MCF 10A (cell line): ENCODE measurements at regions of chr17 and their contacts with region 1.

Region 1: GRCh38 chr17:7484067-7484918 is at the start of gene POLR2A:
- DNase-seq: peak; percentile 98
- H3K4me3 Mint-ChIP-seq: peak within 1 kb of the TSS; percentile 79
- H3K27ac Mint-ChIP-seq: peak within 1 kb of the TSS; percentile 100
- H3K4me1 Mint-ChIP-seq: peaks cover 43% of the 10 kb centered on the region
- H3K27me3 Mint-ChIP-seq: no peaks in the 10 kb centered on the region
- CTCF ChIP-seq: no peak
- total RNA-seq, gene POLR2A: 89.6 and 107 TPM in 2 replicates

Region 2: DNA sequence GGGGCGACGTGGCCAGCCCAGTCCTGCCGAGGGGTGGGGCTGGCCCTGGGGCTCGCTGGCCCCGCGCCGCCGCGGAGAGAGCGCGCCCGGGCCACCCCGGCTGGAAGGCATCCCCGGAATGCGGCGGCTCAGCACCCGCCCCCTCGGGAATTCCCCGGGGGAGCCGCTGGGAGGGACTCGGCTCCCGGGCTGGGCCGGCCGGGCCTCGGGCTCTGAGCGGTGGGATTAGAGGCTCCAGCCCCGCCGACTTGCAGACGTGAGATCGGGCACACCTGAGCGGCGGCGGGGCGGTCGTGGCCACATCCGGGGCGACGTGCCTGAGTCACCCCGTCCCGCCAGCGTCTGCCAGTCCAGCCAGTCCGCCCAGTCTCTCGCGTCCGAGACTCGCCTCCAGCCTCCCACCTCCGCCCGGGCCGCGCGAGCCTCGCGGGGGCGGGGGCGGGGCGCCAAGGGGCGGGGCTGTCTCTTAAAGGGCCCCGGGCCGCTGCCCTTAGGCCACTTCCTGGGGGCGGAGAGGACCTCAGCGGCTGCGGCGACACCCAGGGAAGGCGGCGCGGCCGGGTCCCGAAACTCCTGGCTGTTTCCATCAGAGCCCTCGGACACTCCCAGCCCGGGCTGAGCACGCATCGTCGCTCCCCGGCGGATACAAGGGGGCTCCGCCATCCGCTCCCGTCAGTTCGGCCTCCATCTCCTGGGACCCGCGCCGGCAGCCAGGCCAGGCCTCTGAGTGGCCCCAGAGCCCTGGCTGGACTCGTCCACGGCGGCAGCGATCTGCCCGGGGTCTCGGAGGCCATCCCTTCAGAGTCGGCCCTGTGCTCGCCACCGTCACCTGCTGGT is 132.4 kb before region 1 on chr17 and contains the start of gene KCTD11:
- CTCF ChIA-PET with region 1: interaction called, 5 read pairs
- POLR2A ChIA-PET with region 1: interaction called, 21 read pairs
- intact Hi-C with region 1: loop called (anchors 5 kb)
- DNase-seq: peak; percentile 89
- H3K4me3 Mint-ChIP-seq: peak within 1 kb of the TSS; percentile 85
- H3K27ac Mint-ChIP-seq: peak within 1 kb of the TSS; percentile 93
- H3K4me1 Mint-ChIP-seq: peaks cover 17% of the 10 kb centered on the region
- H3K27me3 Mint-ChIP-seq: no peaks in the 10 kb centered on the region
- CTCF ChIP-seq: no peak
- total RNA-seq, gene KCTD11: 9.2 and 10.1 TPM in 2 replicates

Region 3: GRCh38 chr17:7454980-7455379 is 29.3 kb before region 1 on chr17:
- CTCF ChIA-PET with region 1: interaction called, 3 read pairs
- POLR2A ChIA-PET with region 1: interaction called, 95 read pairs
- intact Hi-C with region 1: no loop called
- DNase-seq: no peak
- H3K4me3 Mint-ChIP-seq: peak overlapping the region; percentile 74
- H3K27ac Mint-ChIP-seq: peak overlapping the region; percentile 14
- H3K4me1 Mint-ChIP-seq: peaks cover 13% of the 10 kb centered on the region
- H3K27me3 Mint-ChIP-seq: no peaks in the 10 kb centered on the region
- CTCF ChIP-seq: no peak

Region 4: DNA sequence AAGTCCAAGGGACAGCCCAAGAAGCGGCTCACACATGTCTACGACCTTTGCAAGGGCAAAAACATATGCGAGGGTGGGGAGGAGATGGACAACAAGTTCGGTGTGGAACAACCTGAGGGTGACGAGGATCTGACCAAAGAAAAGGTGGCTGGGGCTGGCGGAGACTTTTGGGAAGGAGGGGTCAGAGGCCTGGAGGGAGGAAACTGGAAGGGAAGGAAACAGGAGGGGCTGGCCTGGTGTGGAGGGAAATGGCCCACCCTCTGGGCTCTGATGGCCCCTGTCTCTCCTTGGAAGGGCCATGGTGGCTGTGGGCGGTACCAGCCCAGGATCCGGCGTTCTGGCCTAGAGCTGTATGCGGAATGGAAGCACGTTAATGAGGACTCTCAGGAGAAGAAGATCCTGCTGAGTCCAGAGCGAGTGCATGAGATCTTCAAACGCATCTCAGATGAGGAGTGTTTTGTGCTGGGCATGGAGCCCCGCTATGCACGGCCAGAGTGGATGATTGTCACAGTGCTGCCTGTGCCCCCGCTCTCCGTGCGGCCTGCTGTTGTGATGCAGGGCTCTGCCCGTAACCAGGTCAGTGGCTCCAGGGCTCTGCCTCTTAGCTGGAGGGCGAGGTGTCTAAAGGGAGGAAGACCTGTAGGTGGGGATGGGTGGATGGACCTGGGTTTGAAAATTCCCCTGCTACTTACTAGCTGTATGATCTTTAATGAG is 12.3 kb after region 1 on chr17:
- CTCF ChIA-PET with region 1: interaction called, 5 read pairs
- POLR2A ChIA-PET with region 1: interaction called, 11 read pairs
- intact Hi-C with region 1: no loop called
- DNase-seq: no peak
- H3K4me3 Mint-ChIP-seq: no peak overlapping the region
- H3K27ac Mint-ChIP-seq: no peak overlapping the region
- H3K4me1 Mint-ChIP-seq: peaks cover 20% of the 10 kb centered on the region
- H3K27me3 Mint-ChIP-seq: no peaks in the 10 kb centered on the region
- CTCF ChIP-seq: no peak

Region 5: DNA sequence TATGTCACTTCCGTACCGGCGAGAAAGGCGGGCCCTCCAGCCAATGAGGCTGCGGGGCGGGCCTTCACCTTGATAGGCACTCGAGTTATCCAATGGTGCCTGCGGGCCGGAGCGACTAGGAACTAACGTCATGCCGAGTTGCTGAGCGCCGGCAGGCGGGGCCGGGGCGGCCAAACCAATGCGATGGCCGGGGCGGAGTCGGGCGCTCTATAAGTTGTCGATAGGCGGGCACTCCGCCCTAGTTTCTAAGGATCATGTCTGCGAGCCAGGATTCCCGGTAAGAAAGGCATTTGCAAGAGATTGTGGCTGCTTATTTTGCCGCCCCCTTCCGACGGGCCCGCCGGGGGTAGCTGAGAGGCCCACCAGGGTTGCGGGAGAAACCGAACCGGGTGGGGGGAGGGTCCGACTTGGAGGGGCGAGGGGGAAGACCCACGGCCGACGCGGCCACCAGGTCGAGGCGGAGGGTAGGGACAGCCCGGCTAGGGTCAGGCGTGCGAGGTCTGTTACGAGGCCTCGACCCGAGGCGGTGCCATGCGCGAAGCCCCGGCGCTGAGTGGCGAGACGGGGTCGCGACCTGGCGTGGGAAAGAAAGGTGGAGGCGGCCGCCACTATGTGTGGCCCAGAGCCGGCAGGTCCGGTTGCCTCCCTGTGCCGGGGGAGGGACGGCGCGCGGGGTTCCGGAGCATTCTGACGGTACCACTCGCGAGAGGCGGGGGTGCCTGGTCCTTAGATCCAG is 88.5 kb after region 1 on chr17:
- CTCF ChIA-PET with region 1: interaction called, 4 read pairs
- POLR2A ChIA-PET with region 1: interaction called, 14 read pairs
- intact Hi-C with region 1: no loop called
- DNase-seq: peak; percentile 99
- H3K4me3 Mint-ChIP-seq: peak overlapping the region; percentile 90
- H3K27ac Mint-ChIP-seq: peak overlapping the region; percentile 99
- H3K4me1 Mint-ChIP-seq: peaks cover 11% of the 10 kb centered on the region
- H3K27me3 Mint-ChIP-seq: no peaks in the 10 kb centered on the region
- CTCF ChIP-seq: no peak

Region 6: DNA sequence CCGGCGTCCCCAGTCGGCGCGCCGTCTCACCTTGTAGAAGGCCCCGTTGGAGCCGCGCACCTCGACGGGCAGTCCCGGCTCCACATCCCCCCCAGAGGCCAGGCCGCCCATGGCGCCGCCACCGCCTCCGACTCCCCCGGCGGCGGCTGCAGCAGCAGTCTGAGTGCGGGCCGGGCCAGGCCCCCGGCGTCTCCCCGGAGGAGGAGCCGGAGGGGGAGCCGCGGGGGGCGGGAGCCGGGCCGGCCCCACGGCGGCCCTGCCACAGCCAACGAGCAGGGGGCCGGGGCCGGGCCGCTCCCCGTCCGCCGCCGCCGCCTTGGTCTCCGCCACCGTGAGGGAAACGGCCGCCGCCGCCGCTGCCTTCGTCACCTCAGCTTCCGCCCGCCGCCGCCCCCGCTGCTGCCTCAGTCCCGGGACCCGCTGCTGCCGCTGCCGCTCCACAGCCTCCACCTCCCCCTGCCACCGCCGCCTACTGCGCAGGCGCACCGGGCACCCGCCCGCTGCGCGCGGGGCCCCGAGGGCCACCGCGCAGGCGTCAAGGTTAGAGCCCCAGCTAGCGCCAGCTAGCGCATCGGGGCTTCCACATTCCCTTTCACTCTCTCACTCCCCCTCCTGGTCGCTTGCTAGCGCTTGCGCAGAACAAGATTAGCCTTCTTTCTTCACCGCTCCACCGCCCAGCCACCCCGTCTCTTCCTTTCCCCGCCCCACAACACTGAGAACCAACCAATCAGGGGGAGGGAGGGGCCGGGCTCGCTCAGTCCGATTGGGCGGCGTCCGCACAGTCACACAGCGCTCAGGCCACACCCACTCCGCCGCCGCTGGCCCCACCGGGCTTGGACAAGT is 130.3 kb after region 1 on chr17 and contains the start of gene FXR2:
- CTCF ChIA-PET with region 1: no interaction called
- POLR2A ChIA-PET with region 1: interaction called, 10 read pairs
- intact Hi-C with region 1: no loop called
- DNase-seq: peak; percentile 99
- H3K4me3 Mint-ChIP-seq: peak within 1 kb of the TSS; percentile 80
- H3K27ac Mint-ChIP-seq: peak within 1 kb of the TSS; percentile 95
- H3K4me1 Mint-ChIP-seq: peaks cover 32% of the 10 kb centered on the region
- H3K27me3 Mint-ChIP-seq: no peaks in the 10 kb centered on the region
- CTCF ChIP-seq: peak; percentile 37
- total RNA-seq, gene FXR2: 60.7 and 65.1 TPM in 2 replicates